Adrenal gland (tissue), 19 donors: ENCODE measurements at regions of chr1 and their contacts with region 1.

Region 1: DNA sequence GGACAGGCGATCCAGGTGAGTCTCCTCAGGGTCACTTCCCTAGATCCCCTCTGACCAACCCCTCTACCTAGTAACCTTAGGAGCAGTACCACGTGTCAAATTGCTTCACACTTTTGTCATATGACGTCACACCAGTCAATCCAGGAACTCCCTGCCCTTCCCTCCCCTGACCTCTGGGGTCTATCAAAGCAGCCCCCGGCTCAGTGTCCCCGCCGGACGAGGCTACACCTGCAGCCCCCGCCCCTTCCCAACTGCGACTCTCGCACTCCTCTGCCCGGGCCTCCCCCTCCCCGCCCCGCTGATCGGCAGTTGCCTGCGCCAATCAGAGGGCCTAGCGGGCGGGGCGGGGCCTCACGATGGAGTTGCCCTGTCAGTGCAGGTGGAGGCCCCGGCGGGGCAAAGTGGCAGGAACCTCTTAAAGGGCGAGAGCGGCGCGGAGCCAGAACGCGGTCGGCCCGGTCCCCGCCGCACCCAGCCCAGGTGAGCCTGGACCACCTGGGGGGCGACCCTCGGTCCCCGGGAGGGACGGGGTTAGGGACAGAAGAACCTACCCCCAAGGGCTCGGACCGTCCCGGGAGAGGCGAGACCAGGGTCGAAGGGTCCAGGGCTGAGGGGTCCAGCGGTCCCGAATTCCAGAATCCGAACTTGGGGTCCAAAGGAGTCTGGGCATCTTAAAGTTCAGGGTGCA is 27.5 kb upstream of the EPB41 start:
- DNase-seq: peak; percentile 87 to 93 (median 90)
- H3K4me3 ChIP-seq: peak overlapping the region; percentile 60 to 75 (median 72)
- H3K27ac ChIP-seq: peak overlapping the region in 3 of 5 donors; percentile 29 to 77 (median 76)
- H3K4me1 ChIP-seq: peaks cover 11 to 28% of the 10 kb centered on the region in 2 donors
- H3K27me3 ChIP-seq: no peaks in the 10 kb centered on the region
- CTCF ChIP-seq: peak in 2 of 6 experiments; percentile 7 to 29
- POLR2A ChIP-seq: peak; percentile 51 to 80

Region 2: GRCh38 chr1:28526889-28527288 is 360.0 kb before region 1 on chr1:
- intact Hi-C with region 1: no loop called
- DNase-seq: no peak
- H3K4me3 ChIP-seq: no peak overlapping the region
- H3K27ac ChIP-seq: no peak overlapping the region
- H3K4me1 ChIP-seq: no peaks in the 10 kb centered on the region
- H3K27me3 ChIP-seq: no peaks in the 10 kb centered on the region
- CTCF ChIP-seq: no peak
- POLR2A ChIP-seq: no peak

Region 3: DNA sequence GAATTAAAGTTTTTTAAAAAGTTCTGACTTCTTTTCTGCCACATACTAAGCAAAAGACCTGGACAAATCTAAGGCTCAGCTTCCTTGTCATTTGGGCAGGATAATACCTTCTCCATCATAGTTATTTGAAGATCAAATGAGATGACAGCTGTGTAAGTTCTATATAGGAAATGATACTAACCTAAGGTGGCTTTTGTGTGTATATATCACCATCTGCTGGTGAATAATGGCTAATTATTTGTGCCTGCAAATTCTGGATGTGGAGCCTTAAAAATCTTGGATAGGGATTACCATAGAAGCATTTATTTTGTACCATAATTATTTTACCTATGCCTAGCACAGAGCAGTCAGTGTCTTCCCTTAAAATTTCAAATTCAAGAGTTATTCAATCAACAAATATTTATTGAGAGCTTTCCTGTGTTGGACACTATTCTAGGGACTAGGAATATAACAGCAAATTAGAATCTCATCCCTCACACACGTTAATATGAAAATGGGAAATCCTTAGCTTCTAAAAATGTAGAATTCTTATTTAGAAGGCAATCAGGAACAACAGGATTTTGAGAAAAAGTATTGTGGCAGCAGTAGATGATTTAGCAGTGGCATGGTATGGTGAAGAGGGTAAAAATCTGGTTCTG is 147.1 kb after region 1 on chr1:
- intact Hi-C with region 1: loop called (anchors 2 to 5 kb)
- DNase-seq: no peak
- H3K4me3 ChIP-seq: no peak overlapping the region
- H3K27ac ChIP-seq: no peak overlapping the region
- H3K4me1 ChIP-seq: no peaks in the 10 kb centered on the region
- H3K27me3 ChIP-seq: no peaks in the 10 kb centered on the region
- CTCF ChIP-seq: peak; percentile 53 to 86 (median 76)
- POLR2A ChIP-seq: no peak

Region 4: DNA sequence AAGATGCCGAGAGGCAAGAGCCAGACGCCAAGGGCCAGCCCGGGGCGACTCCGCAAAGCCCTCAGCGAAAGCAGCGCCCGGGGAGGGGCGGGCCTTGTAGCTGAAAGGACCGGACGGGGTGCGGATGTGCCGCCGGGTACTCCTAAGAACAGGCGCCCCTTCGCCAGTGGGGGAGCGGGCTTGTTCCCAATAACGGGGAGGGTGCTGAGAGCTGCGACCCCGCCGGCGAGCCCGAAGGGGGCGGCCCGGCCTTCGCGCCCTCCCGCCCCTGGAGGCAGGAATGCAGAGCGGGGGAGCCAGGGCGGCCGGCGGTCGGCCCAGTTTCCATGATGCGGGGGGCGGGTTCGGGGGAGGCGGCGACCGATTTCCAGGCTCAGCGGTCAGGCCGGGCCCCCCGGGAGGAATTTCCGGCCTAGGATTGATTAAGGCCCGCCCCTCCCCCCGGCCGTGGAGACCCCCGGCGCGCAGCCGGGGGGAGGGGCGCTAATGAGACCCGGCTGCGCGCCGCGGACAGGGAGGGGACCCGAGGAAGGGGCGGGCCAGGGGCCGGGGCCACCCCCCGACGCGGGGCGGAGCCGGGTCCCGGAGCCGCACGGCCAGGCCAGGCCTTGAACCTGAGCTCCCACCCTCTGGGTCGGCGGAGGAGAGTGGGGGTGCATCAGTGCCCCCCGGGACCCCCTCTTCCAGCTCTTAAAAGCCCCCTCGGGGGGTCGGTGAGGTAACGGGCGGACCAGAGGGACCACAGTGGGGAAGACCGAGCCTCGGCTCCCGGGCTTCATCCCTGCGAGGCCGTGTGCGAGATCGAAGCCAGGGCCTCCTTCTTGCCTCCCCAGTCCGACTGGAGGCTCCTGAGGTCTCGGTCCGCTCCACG is 237.7 kb after region 1 on chr1:
- intact Hi-C with region 1: loop called in 1 of 2 experiments (anchors 10 kb)
- DNase-seq: peak; percentile 63 to 84 (median 74)
- H3K4me3 ChIP-seq: peak overlapping the region in 2 of 4 donors; percentile 40 to 95
- H3K27ac ChIP-seq: peak overlapping the region in 4 of 5 donors; percentile 45 to 96 (median 80)
- H3K4me1 ChIP-seq: peaks cover 22 to 27% of the 10 kb centered on the region in 2 donors
- H3K27me3 ChIP-seq: peaks cover 12% of the 10 kb centered on the region
- CTCF ChIP-seq: peak; percentile 16 to 92 (median 69)
- POLR2A ChIP-seq: peak in 1 of 2 donors; percentile 28

Region 5: DNA sequence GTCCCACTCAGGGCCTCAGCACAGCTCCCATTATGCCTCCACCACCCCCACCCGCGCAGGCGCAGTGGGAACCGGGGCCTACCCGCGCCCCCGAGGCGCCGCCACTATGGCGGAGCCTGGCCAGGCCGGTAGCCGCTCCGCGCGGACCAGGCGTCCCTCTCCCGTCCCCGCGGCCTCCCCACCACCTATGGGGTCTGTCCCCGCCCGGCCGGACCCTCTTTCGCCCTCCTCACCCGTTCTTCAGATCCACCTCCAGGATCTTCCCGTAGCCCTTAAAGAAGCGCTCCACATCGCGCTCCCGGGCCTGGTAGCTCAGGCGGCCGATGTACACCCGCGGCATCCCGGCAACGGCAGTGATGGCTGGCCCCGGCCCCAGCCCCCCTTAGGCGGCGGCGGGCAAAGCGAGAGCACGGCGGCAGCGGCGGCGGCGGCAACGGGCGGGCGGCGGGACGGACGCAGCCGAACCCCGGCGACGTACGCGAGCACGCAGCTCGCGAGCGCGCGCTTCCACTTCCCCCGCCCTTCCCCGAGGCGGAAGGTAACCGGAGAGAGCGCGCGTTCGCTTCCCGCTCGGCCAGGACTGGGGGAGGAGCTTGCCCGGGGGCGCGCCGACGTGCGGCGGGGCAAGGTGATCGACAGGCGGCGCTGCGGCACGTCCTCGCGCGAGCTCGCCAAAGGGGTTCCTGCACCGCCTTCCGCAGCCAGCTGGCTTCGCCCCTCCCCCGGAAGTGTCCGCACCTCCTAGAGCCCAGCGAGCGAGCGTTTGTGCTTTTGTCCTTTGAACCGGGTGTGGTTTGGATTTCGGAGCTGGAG is 294.7 kb after region 1 on chr1 and contains the start of gene SRSF4:
- intact Hi-C with region 1: loop called in 1 of 2 experiments (anchors 10 kb)
- DNase-seq: peak; percentile 99
- H3K4me3 ChIP-seq: peak within 1 kb of the TSS; percentile 68 to 96 (median 94)
- H3K27ac ChIP-seq: peak within 1 kb of the TSS; percentile 97 to 100 (median 100)
- H3K4me1 ChIP-seq: peaks cover 26 to 52% of the 10 kb centered on the region in 2 donors
- H3K27me3 ChIP-seq: no peaks in the 10 kb centered on the region
- CTCF ChIP-seq: peak; percentile 35 to 91 (median 58)
- POLR2A ChIP-seq: peak; percentile 95 to 97
- total RNA-seq, gene SRSF4: 35.1 to 77.4 (median 51.0) TPM

Region 6: GRCh38 chr1:29202584-29203340 is 315.9 kb after region 1 on chr1:
- intact Hi-C with region 1: loop called in 1 of 2 experiments (anchors 5 kb)
- DNase-seq: peak; percentile 94 to 98 (median 97)
- H3K4me3 ChIP-seq: no peak overlapping the region
- H3K27ac ChIP-seq: peak overlapping the region in 4 of 5 donors; percentile 6 to 84 (median 71)
- H3K4me1 ChIP-seq: peaks cover 8 to 11% of the 10 kb centered on the region in 2 donors
- H3K27me3 ChIP-seq: no peaks in the 10 kb centered on the region
- CTCF ChIP-seq: peak; percentile 96 to 98 (median 97)
- POLR2A ChIP-seq: no peak

Region 7: DNA sequence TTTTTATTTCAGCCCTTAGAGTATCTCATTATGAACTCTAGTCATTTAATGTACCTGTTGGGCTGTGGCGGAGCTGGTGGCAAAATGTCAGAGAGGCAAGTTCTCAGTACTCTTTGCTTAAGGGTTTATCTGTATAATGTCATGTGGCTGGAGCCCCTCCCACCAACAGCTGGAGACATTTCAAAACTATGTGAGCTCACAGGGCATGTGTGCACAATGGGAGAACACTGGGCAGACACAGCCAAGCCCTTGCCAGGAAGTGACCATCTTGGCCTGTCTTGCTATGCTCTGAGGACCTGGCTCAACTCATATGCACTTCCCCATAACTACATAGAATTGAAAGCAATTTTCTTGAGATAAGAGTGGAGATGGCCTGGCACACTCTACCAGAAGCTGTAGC is 645.9 kb after region 1 on chr1:
- intact Hi-C with region 1: no loop called
- DNase-seq: peak in 1 of 7 donors; percentile 18
- H3K4me3 ChIP-seq: no peak overlapping the region
- H3K27ac ChIP-seq: no peak overlapping the region
- H3K4me1 ChIP-seq: no peaks in the 10 kb centered on the region
- H3K27me3 ChIP-seq: no peaks in the 10 kb centered on the region
- CTCF ChIP-seq: no peak
- POLR2A ChIP-seq: no peak

Region 8: DNA sequence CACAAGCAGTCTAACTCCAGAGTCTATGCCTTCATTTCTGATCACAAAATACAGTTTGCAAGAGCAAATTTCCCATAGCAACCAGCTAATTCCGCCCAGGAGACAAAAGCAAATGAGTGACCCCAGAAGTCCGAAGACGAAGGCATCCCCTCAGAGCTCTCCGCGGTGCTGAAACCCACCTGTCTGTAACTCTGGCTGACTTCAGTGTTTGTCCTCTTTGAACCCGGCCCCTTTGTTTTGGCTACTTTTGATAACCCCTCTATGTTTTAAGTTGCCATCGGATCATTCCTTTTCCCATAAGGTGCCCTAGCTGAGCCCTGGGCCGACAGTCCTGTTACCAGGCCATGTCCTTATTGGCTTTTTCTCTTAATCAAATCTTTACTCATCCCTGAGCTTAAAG is 865.3 kb after region 1 on chr1:
- intact Hi-C with region 1: no loop called
- DNase-seq: peak in 1 of 7 donors; percentile 11
- H3K4me3 ChIP-seq: no peak overlapping the region
- H3K27ac ChIP-seq: no peak overlapping the region
- H3K4me1 ChIP-seq: no peaks in the 10 kb centered on the region
- H3K27me3 ChIP-seq: no peaks in the 10 kb centered on the region
- CTCF ChIP-seq: no peak
- POLR2A ChIP-seq: no peak